Dorsolateral prefrontal cortex (tissue), 120 donors: ENCODE measurements at regions of chr9 and their contacts with region 1.

Region 1: DNA sequence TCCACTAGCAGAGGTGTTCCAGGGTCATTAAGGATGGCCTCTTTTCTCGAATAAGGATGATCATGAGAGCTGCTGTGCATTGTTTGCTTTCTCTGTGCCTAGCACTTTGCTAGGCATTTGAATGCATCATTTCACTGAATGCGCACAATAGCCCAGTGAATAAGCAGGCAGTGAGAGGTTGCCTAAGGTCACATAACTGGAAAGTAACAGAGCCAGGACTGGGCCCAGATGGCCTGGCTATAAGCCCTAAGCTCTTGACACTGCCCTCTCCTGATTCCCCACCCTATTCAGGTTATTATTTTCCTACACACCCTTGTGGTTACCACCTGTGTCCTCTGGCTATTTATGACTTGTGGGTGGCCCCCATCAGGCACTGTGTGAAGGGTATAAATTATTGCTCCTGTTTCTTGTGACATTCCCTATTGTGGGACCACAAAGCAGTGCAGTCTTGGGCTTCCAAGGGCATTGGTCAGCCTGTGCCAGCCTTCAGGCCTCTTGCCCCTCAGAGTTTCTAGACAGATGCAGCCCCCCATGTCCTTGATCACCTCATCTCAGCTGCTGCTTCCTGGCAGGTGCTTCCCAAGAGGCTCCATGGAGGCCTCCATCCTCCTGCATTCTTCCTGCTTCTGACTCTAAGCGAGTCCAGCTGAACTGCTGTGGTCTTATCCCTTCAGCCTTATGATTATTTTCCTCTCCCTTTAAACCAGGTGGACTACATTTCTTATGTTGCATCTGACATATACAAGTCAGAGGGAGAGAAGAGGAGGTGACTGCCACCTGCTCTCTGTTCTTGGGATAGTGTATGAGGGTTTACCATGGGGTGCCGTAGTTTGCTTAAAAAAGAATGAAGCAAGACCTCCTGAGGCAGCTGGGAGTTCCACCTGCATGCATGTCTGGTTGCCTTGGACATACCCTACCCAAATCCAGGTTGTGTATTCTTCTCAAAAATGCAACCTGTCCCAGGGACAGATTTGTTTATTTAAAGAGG is 47.6 kb downstream of the ANGPTL2 start:
- DNase-seq: peak in 4 of 10 donors; percentile 57 to 80 (median 74)
- H3K4me3 ChIP-seq: peak overlapping the region in 1 of 59 donors; percentile 1
- H3K27ac ChIP-seq: peak overlapping the region; percentile 2 to 93 (median 79)
- H3K27me3 ChIP-seq: no peaks in the 10 kb centered on the region
- CTCF ChIP-seq: peak in 4 of 56 donors; percentile 14 to 31 (median 19)

Region 2: GRCh38 chr9:127035951-127036350 is 38.9 kb before region 1 on chr9:
- intact Hi-C with region 1: loop called in 1 of 2 experiments (anchors 5 kb)
- DNase-seq: peak in 4 of 10 donors; percentile 38 to 55 (median 42)
- H3K4me3 ChIP-seq: peak overlapping the region in 1 of 59 donors; percentile 2
- H3K27ac ChIP-seq: peak overlapping the region in 51 of 59 donors; percentile 1 to 88 (median 68)
- H3K27me3 ChIP-seq: no peaks in the 10 kb centered on the region
- CTCF ChIP-seq: peak in 1 of 56 donors; percentile 14